ENCODE measurements at regions of chr6 and their contacts with region 1.

Region 1: DNA sequence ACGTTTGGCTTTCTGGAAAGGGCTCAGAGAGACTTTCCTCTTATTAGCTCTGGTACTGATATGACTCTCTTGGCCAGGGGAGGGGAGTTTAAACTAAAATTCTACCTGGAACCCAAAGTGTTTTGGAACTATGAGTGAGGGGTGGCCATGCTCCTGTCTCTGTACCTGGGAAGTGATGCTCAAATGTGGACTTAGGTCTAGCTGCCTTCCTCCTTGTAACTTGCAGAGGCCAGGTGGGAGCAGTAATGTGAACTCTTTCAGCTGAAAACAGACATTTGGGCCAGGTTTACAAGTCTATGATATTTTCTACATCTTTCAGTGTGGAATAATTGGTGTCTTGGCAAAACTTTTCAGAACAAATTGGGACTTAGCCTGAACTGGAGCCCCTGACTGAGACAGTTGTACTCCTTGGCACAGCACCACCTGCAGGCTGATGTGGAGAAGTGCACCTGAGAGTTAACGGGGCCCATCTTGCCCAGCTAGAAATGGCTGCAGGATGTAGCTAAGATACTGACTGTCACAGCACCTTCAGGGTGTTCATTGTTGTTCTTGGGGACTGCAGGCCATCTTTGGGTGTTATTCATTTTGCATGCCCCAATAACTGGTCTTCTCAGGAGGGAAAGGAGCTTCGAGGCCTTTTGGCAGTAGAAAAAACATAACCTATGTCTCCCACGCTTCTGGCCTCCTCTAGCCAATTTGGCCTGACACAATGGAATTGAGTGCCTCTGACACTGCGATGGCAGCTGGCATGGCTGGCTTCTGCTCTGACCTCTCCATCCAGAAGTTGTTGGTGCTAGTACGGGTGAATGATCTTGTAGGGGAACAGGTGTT is 37.1 kb downstream of the CD109 start:
- DNase-seq: peak; percentile 82
- H3K4me3 ChIP-seq: no peak overlapping the region
- H3K27ac ChIP-seq: no peak overlapping the region
- H3K4me1 ChIP-seq: no peaks in the 10 kb centered on the region
- H3K27me3 ChIP-seq: no peaks in the 10 kb centered on the region
- CTCF ChIP-seq: peak; percentile 70 to 94 (median 91)
- POLR2A ChIP-seq: no peak

Region 2: DNA sequence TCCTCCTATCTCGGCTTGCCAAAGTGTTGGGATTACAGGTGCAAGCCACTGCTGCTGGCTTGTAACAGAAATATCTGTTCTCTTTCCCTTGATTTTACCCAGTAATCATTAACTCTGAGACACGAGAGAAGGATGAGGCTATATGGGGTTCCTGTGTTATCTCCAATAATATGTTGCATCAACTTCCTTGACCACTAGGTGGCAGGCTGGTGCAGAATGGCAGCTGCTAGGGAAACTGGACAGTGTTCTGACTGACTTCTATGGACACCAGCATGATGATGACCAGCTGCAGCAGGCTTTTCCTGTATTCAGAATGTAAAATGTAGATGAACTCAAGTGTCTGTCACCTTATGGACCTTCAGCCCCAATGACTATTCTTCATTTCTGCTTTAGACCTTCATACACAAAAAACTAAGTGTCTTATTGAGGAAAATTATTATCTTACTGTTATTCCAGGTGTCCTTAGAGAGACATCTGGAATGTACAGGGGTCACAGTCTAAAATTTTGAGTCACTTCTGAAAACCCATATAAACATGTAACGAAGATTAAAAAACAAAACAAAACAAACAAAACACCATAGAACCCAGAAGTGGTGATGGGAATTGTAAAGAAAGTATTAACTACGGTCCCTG is 57.5 kb before region 1 on chr6:
- intact Hi-C with region 1: loop called (anchors 5 kb)
- DNase-seq: peak; percentile 85
- H3K4me3 ChIP-seq: no peak overlapping the region
- H3K27ac ChIP-seq: no peak overlapping the region
- H3K4me1 ChIP-seq: peaks cover 0 to 7% (median 0%) of the 10 kb centered on the region in 6 donors
- H3K27me3 ChIP-seq: peaks cover 0 to 13% (median 0%) of the 10 kb centered on the region in 7 donors
- CTCF ChIP-seq: peak in 10 of 11 experiments; percentile 57 to 84 (median 76)
- POLR2A ChIP-seq: no peak